ENCODE measurements at regions of chr6 and their contacts with region 1.

Region 1: DNA sequence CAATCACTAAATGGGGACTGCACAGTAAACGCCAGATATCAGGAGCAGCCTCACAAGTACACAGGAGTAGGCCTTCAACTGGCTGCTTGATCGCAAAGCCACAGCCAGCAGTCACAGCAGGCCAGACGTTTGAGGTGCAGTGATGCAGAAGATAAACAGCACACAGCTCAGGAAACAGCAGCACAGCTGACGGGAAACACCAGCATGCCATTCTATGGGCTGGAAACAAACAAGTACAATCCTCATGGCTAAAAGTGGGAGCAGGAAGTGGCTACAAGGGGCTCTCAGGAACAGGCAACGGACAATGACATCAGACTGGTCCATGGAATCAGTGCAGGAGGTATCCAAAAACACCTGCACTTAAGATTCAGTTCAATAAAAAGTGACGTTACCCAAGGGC is 111.0 kb downstream of the DTNBP1 start:
- DNase-seq: peak; percentile 75
- H3K4me3 ChIP-seq: no peak overlapping the region
- H3K27ac ChIP-seq: no peak overlapping the region
- H3K4me1 ChIP-seq: peaks cover 60% of the 10 kb centered on the region
- H3K27me3 ChIP-seq: no peaks in the 10 kb centered on the region
- CTCF ChIP-seq: no peak

Region 2: DNA sequence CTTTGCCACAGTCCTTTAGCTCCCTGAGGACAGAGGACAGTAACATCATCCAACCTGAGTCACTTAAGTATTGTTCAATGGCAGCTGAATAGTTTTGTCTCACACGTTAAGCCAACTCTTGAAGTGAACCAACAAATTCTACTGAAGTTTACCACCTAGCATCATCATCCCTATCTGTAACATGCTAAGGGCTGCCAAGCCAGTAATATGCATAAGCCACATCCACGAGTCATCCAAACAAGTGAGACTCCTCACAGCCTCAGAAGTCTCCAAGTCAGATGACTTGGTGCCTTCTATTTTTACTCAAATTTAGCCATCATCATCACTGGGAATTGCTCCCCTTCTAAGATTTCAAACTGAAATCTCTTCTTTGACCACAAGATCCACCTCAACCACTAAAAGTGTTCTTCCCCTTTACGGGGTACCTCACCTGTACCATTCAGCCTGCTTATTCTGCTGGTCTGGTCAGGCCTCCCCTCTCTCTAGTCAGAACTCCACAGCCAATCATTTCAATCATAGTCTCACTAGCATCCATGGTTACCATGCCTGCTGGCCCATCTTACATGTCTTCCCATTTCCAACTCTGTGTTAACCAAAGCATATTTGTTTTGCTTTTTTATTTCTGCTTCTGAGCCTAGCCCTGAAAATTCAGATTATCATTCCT is 37.3 kb after region 1 on chr6:
- CTCF ChIA-PET with region 1: no interaction called
- POLR2A ChIA-PET with region 1: no interaction called
- intact Hi-C with region 1: loop called (anchors 5 kb)
- DNase-seq: no peak
- H3K4me3 ChIP-seq: no peak overlapping the region
- H3K27ac ChIP-seq: no peak overlapping the region
- H3K4me1 ChIP-seq: peaks cover 28% of the 10 kb centered on the region
- H3K27me3 ChIP-seq: no peaks in the 10 kb centered on the region
- CTCF ChIP-seq: no peak

Region 3: DNA sequence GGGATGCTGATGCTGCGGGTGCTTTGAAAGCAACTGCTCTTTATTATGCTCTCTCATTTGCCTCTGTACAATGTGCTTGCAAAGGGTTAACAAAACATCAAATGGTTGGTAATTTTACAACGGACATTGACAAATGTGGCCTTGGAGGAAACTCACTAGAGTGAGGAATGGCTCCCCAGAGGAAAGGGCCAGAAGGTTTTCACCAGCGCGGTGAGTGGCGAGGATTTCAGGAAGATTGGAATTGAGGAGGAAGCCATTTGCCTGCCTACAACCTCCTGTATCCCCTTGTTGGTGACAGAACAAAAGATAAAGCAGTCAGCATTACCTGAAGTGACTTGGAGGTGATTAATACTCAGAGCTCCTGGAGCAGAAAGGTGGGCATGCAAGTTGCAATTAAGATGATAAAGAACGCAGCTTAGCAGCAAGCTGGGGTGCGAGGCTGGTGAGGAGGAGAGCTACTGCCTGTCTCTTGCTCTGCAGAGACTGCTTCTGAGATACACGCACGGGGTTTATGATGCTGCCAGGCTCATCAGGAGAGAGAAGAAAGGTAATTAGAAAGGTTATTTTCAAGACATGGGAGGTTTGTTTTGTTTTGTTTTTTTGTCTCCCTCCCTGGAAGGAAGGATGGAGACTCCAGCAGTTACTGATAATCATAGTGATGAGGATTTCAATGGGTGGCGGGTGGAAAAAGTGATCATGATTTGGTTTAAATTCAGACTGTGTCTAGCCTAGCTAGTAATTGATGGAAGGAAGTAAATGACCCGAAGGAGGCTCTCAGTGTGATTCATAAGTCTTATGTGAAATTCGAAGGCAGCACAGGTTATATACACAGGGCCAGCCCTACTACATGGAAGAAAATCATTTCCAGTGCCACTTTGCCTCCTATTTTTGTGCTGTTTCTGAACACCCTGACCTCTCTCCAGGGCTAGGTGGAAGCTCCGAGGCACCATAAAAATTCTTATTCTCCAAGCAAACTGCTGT is 252.7 kb after region 1 on chr6:
- CTCF ChIA-PET with region 1: no interaction called
- POLR2A ChIA-PET with region 1: no interaction called
- intact Hi-C with region 1: no loop called
- DNase-seq: no peak
- H3K4me3 ChIP-seq: no peak overlapping the region
- H3K27ac ChIP-seq: no peak overlapping the region
- H3K4me1 ChIP-seq: no peaks in the 10 kb centered on the region
- H3K27me3 ChIP-seq: no peaks in the 10 kb centered on the region
- CTCF ChIP-seq: no peak

Measured in A673 (cell line).